MCF 10A (cell line): ENCODE measurements at regions of chr2 and their contacts with region 1.

Region 1: DNA sequence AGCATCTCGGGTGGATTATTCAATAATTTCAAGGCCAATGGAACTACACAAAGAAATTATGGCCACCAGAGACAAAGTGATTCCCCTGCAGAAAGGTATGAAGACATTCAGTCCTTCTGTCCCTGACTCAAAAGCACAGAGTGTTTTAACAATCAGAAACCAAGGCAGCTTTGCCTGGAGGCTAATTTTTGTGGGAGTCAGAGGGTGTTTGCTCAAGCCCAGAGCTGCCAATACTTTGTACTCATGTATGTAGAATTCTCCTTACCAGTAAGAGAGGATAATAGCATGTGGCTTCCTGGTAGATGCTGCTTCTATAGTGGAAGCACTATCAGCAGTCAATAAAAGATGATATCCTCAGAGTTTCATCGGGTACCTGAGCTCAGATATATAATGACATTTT is 178.4 kb downstream of the KCNE4 start:
- DNase-seq: peak; percentile 87
- H3K4me3 Mint-ChIP-seq: no peak overlapping the region
- H3K27ac Mint-ChIP-seq: peak overlapping the region; percentile 76
- H3K4me1 Mint-ChIP-seq: peaks cover 28% of the 10 kb centered on the region
- H3K27me3 Mint-ChIP-seq: no peaks in the 10 kb centered on the region
- CTCF ChIP-seq: no peak

Region 2: GRCh38 chr2:222637067-222637466 is 593.3 kb before region 1 on chr2:
- CTCF ChIA-PET with region 1: no interaction called
- POLR2A ChIA-PET with region 1: no interaction called
- intact Hi-C with region 1: no loop called
- DNase-seq: no peak
- H3K4me3 Mint-ChIP-seq: no peak overlapping the region
- H3K27ac Mint-ChIP-seq: peak overlapping the region; percentile 20
- H3K4me1 Mint-ChIP-seq: no peaks in the 10 kb centered on the region
- H3K27me3 Mint-ChIP-seq: no peaks in the 10 kb centered on the region
- CTCF ChIP-seq: no peak

Region 3: GRCh38 chr2:223058952-223059716 is 171.2 kb before region 1 on chr2:
- CTCF ChIA-PET with region 1: no interaction called
- POLR2A ChIA-PET with region 1: no interaction called
- intact Hi-C with region 1: no loop called
- DNase-seq: peak; percentile 7
- H3K4me3 Mint-ChIP-seq: no peak overlapping the region
- H3K27ac Mint-ChIP-seq: no peak overlapping the region
- H3K4me1 Mint-ChIP-seq: no peaks in the 10 kb centered on the region
- H3K27me3 Mint-ChIP-seq: no peaks in the 10 kb centered on the region
- CTCF ChIP-seq: no peak

Region 4: GRCh38 chr2:223217350-223217749 is 13.0 kb before region 1 on chr2:
- CTCF ChIA-PET with region 1: no interaction called
- POLR2A ChIA-PET with region 1: interaction called, 13 read pairs
- intact Hi-C with region 1: no loop called
- DNase-seq: peak; percentile 60
- H3K4me3 Mint-ChIP-seq: no peak overlapping the region
- H3K27ac Mint-ChIP-seq: no peak overlapping the region
- H3K4me1 Mint-ChIP-seq: peaks cover 16% of the 10 kb centered on the region
- H3K27me3 Mint-ChIP-seq: no peaks in the 10 kb centered on the region
- CTCF ChIP-seq: no peak